ENCODE measurements at regions of chr14 and their contacts with region 1.

Region 1: GRCh38 chr14:54509546-54510501 is at the start of gene CGRRF1:
- DNase-seq: peak; percentile 93 to 95 (median 93)
- H3K4me3 ChIP-seq: peak within 1 kb of the TSS; percentile 86 to 87
- H3K4me3 Mint-ChIP-seq: peak within 1 kb of the TSS; percentile 93 to 99 (median 97)
- H3K27ac ChIP-seq: peak within 1 kb of the TSS; percentile 77
- H3K27ac Mint-ChIP-seq: peak within 1 kb of the TSS; percentile 84 to 97 (median 96)
- H3K4me1 ChIP-seq: peaks cover 41% of the 10 kb centered on the region
- H3K4me1 Mint-ChIP-seq: peaks cover 46 to 61% (median 50%) of the 10 kb centered on the region in 4 donors
- H3K27me3 ChIP-seq: no peaks in the 10 kb centered on the region
- H3K27me3 Mint-ChIP-seq: no peaks in the 10 kb centered on the region
- total RNA-seq, gene CGRRF1: 21.8 to 23.8 TPM

Region 2: GRCh38 chr14:54427871-54428270 is 82.0 kb before region 1 on chr14:
- CTCF ChIA-PET with region 1: no interaction called
- POLR2A ChIA-PET with region 1: no interaction called
- intact Hi-C with region 1: no loop called
- DNase-seq: no peak
- H3K4me3 ChIP-seq: no peak overlapping the region
- H3K4me3 Mint-ChIP-seq: no peak overlapping the region
- H3K27ac ChIP-seq: no peak overlapping the region
- H3K27ac Mint-ChIP-seq: peak overlapping the region in 2 of 7 donors; percentile 0 to 41
- H3K4me1 ChIP-seq: no peaks in the 10 kb centered on the region
- H3K4me1 Mint-ChIP-seq: peaks cover 1 to 8% (median 4%) of the 10 kb centered on the region in 4 donors
- H3K27me3 ChIP-seq: no peaks in the 10 kb centered on the region
- H3K27me3 Mint-ChIP-seq: no peaks in the 10 kb centered on the region

Region 3: GRCh38 chr14:54488646-54489317 is 21.0 kb before region 1 on chr14 and contains the start of gene GMFB:
- CTCF ChIA-PET with region 1: interaction called, 55 read pairs
- POLR2A ChIA-PET with region 1: interaction called, 53 read pairs
- intact Hi-C with region 1: loop called (anchors 1 kb)
- DNase-seq: peak; percentile 84 to 88 (median 87)
- H3K4me3 ChIP-seq: peak within 1 kb of the TSS; percentile 50 to 66
- H3K4me3 Mint-ChIP-seq: peak within 1 kb of the TSS; percentile 85 to 97 (median 94)
- H3K27ac ChIP-seq: peak within 1 kb of the TSS; percentile 80
- H3K27ac Mint-ChIP-seq: peak within 1 kb of the TSS; percentile 89 to 99 (median 97)
- H3K4me1 ChIP-seq: peaks cover 57% of the 10 kb centered on the region
- H3K4me1 Mint-ChIP-seq: peaks cover 48 to 70% (median 57%) of the 10 kb centered on the region in 4 donors
- H3K27me3 ChIP-seq: no peaks in the 10 kb centered on the region
- H3K27me3 Mint-ChIP-seq: no peaks in the 10 kb centered on the region
- total RNA-seq, gene GMFB: 31.1 to 36.4 TPM

Region 4: DNA sequence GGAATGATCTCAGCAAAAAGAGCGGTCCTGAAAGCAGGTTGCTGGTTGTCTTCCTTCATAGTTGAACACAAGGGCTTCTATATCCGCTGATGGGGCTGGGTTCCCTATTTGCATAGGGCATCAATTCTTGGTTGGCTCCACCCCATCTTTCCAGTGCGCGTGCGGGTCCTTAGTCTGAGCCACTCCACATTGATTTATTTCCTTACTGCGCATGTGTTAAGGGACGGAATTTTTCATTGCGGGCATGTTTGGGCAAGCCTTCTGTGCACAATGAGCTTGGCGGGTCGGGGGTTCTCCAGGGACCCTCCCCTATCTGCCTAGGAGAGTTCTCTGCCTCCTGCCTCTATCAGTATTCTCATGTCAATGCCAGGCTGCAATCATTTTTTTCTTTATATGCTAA is 702.8 kb after region 1 on chr14:
- CTCF ChIA-PET with region 1: no interaction called
- POLR2A ChIA-PET with region 1: no interaction called
- intact Hi-C with region 1: no loop called
- DNase-seq: no peak
- H3K4me3 ChIP-seq: no peak overlapping the region
- H3K4me3 Mint-ChIP-seq: no peak overlapping the region
- H3K27ac ChIP-seq: no peak overlapping the region
- H3K27ac Mint-ChIP-seq: no peak overlapping the region
- H3K4me1 ChIP-seq: no peaks in the 10 kb centered on the region
- H3K4me1 Mint-ChIP-seq: peaks cover 0 to 5% (median 2%) of the 10 kb centered on the region in 4 donors
- H3K27me3 ChIP-seq: no peaks in the 10 kb centered on the region
- H3K27me3 Mint-ChIP-seq: peaks cover 0 to 1% of the 10 kb centered on the region in 2 donors

Region 5: DNA sequence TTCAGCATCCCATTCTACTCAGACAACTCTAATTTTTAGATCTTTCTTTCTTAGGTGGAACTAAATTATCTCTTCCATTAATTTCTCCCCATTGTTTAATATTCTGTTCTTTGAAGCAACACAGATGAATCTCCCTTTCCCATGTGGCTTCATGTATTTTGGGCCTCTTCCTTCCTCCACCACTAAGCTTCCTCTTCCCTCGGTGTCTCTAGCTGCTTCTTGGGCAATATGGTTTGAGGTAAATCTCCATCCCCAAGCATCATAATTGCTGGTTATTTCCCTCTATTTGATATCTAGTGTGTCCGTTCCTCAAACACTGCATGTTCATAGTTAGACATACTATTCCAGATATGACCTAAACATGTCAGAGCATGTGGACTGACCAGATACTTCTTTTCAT is 1727.6 kb after region 1 on chr14:
- CTCF ChIA-PET with region 1: no interaction called
- POLR2A ChIA-PET with region 1: no interaction called
- intact Hi-C with region 1: no loop called
- DNase-seq: no peak
- H3K4me3 ChIP-seq: no peak overlapping the region
- H3K4me3 Mint-ChIP-seq: no peak overlapping the region
- H3K27ac ChIP-seq: no peak overlapping the region
- H3K27ac Mint-ChIP-seq: peak overlapping the region in 1 of 7 donors; percentile 26
- H3K4me1 ChIP-seq: no peaks in the 10 kb centered on the region
- H3K4me1 Mint-ChIP-seq: peaks cover 0 to 3% (median under 1%) of the 10 kb centered on the region in 4 donors
- H3K27me3 ChIP-seq: no peaks in the 10 kb centered on the region
- H3K27me3 Mint-ChIP-seq: no peaks in the 10 kb centered on the region

Measured in CD4-positive, alpha-beta memory T cell (primary cell).